ENCODE measurements at regions of chr16 and their contacts with region 1.

Region 1: DNA sequence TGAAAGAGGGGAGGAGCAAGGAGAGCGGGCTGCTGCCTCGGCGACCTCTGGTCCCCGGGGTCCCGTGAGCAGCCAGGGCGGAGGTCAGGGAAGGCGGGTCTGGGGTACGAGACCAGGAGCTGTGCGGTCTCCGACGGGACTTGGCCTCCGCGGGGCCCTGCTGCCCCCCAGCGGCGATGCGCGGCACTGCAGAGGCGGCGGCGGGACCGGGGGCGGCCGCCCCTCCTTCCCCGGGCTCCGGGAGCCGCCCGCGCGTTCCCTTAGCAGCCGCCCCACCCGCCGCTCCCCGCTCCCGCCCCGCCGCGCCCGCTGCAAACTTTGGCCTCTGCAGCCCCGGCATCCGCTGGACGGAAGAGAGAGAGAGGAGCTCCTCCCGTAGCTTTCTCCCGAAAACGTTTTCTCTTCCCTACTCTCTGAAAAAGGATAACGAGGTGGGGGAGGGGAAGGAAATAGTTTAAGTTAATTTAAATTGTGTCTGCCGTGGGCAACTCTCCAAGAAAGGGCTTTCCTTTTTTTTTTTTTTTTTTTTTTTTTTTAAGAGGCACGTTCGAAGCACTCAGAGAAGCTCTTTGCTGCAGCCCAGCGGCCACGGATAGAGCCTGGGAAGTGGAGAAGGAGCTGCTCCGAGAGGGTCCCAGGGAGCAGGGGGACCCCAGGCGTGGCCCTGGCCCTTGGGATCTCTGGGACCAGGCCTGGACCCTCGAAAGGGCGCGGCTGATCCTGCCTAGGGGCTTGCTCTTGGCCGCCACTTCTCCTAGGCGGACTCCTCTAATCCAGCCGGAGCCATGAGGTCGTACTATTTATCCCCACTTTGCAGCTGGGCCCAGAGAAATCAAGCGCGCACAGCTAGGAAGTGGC is 43.2 kb downstream of the C16orf82 start:
- DNase-seq: peak; percentile 93
- ATAC-seq: peak; percentile 83
- H3K4me3 Mint-ChIP-seq: peak overlapping the region; percentile 75
- H3K27ac Mint-ChIP-seq: no peak overlapping the region
- H3K4me1 Mint-ChIP-seq: peaks cover 28% of the 10 kb centered on the region
- H3K27me3 Mint-ChIP-seq: peaks cover 7% of the 10 kb centered on the region; the same call in 1 of the 2 replicates
- CTCF ChIP-seq: peak; percentile 99

Region 2: GRCh38 chr16:26672206-26672605 is 437.7 kb before region 1 on chr16:
- CTCF ChIA-PET with region 1: interaction called, 13 read pairs
- POLR2A ChIA-PET with region 1: no interaction called
- DNase-seq: no peak
- ATAC-seq: no peak
- H3K4me3 Mint-ChIP-seq: no peak overlapping the region
- H3K27ac Mint-ChIP-seq: no peak overlapping the region
- H3K4me1 Mint-ChIP-seq: peaks cover 7% of the 10 kb centered on the region
- H3K27me3 Mint-ChIP-seq: no peaks in the 10 kb centered on the region; the same call in none of the 2 replicates
- CTCF ChIP-seq: no peak

Region 3: GRCh38 chr16:26951947-26952346 is 157.9 kb before region 1 on chr16:
- CTCF ChIA-PET with region 1: interaction called, 16 read pairs
- POLR2A ChIA-PET with region 1: no interaction called
- DNase-seq: no peak
- ATAC-seq: no peak; the same call in 1 of the 2 replicates
- H3K4me3 Mint-ChIP-seq: no peak overlapping the region
- H3K27ac Mint-ChIP-seq: no peak overlapping the region
- H3K4me1 Mint-ChIP-seq: no peaks in the 10 kb centered on the region
- H3K27me3 Mint-ChIP-seq: no peaks in the 10 kb centered on the region; the same call in 1 of the 2 replicates
- CTCF ChIP-seq: no peak

Region 4: DNA sequence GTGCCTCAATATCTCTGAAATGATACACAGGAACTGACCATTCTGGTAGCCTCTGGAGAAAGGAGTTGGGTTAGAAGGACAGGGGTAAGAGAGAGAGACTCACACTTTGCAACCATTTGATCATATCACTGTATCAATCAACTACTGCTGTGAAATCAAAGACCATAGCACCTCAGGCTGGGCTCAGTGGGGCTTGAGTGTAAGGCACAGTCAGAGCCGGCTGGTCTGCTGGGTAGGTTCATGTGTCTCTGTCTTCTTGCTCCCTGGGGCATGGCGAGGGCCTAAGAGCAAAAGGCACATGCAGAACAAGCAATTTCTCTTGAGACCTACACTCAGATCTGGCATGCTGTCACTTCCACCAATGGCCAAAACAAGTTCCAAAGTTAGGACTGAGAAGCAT is 89.9 kb before region 1 on chr16:
- CTCF ChIA-PET with region 1: interaction called, 14 read pairs
- POLR2A ChIA-PET with region 1: no interaction called
- DNase-seq: no peak
- ATAC-seq: no peak
- H3K4me3 Mint-ChIP-seq: no peak overlapping the region
- H3K27ac Mint-ChIP-seq: no peak overlapping the region
- H3K4me1 Mint-ChIP-seq: peaks cover 10% of the 10 kb centered on the region; the same call in 1 of the 2 replicates
- H3K27me3 Mint-ChIP-seq: 0 out of 2 replicates have a peak, but pooled peaks cover 2% of the 10 kb centered on the region
- CTCF ChIP-seq: no peak

Region 5: GRCh38 chr16:27080870-27081269 is 29.0 kb before region 1 on chr16:
- CTCF ChIA-PET with region 1: interaction called, 53 read pairs
- POLR2A ChIA-PET with region 1: no interaction called
- DNase-seq: peak; percentile 37
- ATAC-seq: peak; percentile 87
- H3K4me3 Mint-ChIP-seq: no peak overlapping the region
- H3K27ac Mint-ChIP-seq: no peak overlapping the region
- H3K4me1 Mint-ChIP-seq: peaks cover 27% of the 10 kb centered on the region
- H3K27me3 Mint-ChIP-seq: peaks cover 3% of the 10 kb centered on the region
- CTCF ChIP-seq: peak; percentile 18; the same call in 1 of the 2 replicates

Region 6: GRCh38 chr16:27179500-27180072 is 69.7 kb after region 1 on chr16:
- CTCF ChIA-PET with region 1: interaction called, 28 read pairs
- POLR2A ChIA-PET with region 1: no interaction called
- DNase-seq: peak; percentile 92
- ATAC-seq: peak; percentile 96
- H3K4me3 Mint-ChIP-seq: no peak overlapping the region
- H3K27ac Mint-ChIP-seq: no peak overlapping the region
- H3K4me1 Mint-ChIP-seq: no peaks in the 10 kb centered on the region
- H3K27me3 Mint-ChIP-seq: peaks cover 3% of the 10 kb centered on the region
- CTCF ChIP-seq: peak; percentile 75

Region 7: DNA sequence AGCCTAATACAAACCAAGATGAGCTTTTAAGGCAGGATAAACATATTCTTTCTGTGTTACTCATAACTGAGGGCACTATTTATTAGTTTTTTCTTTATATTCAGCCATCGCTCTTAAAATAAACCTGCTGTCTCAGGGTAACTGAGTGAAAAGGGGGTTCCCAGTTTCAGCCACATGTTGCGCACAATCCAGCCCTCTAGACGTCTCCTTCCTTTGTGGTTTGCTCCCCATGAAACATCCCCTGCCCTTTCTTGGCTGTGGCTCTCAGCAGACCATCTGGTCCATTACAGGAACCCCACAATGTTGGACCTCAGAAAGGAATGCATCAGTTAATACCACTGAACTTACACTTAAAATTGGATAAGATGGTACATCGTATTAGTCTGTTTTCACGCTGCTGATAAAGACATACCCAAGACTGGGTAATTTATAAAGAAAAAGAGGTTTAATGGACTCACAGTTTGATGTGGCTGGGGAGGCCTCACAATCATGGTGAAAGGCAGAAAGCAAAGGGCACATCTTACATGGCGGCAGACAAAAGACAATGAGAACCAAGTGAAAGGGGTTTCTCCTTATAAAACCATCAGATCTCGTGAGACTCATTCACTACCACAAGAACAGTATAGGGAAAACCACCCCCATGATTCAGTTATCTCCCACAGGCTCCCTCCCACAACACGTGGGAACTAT is 279.5 kb after region 1 on chr16:
- CTCF ChIA-PET with region 1: no interaction called
- POLR2A ChIA-PET with region 1: no interaction called
- DNase-seq: no peak
- ATAC-seq: no peak
- H3K4me3 Mint-ChIP-seq: no peak overlapping the region
- H3K27ac Mint-ChIP-seq: no peak overlapping the region
- H3K4me1 Mint-ChIP-seq: no peaks in the 10 kb centered on the region
- H3K27me3 Mint-ChIP-seq: peaks cover 9% of the 10 kb centered on the region
- CTCF ChIP-seq: no peak

Region 8: GRCh38 chr16:27511657-27512448 is 402.0 kb after region 1 on chr16:
- CTCF ChIA-PET with region 1: no interaction called
- POLR2A ChIA-PET with region 1: no interaction called
- DNase-seq: no peak
- ATAC-seq: no peak
- H3K4me3 Mint-ChIP-seq: no peak overlapping the region
- H3K27ac Mint-ChIP-seq: no peak overlapping the region
- H3K4me1 Mint-ChIP-seq: no peaks in the 10 kb centered on the region
- H3K27me3 Mint-ChIP-seq: no peaks in the 10 kb centered on the region
- CTCF ChIP-seq: no peak